ENCODE measurements at regions of chr5 and their contacts with region 1.

Region 1: GRCh38 chr5:149367249-149367971 is 9.6 kb downstream of the PCYOX1L start:
- DNase-seq: peak; percentile 71
- ATAC-seq: peak; percentile 65
- H3K4me3 Mint-ChIP-seq: no peak overlapping the region
- H3K27ac Mint-ChIP-seq: no peak overlapping the region
- H3K4me1 Mint-ChIP-seq: peaks cover 7% of the 10 kb centered on the region
- H3K27me3 Mint-ChIP-seq: no peaks in the 10 kb centered on the region

Region 2: DNA sequence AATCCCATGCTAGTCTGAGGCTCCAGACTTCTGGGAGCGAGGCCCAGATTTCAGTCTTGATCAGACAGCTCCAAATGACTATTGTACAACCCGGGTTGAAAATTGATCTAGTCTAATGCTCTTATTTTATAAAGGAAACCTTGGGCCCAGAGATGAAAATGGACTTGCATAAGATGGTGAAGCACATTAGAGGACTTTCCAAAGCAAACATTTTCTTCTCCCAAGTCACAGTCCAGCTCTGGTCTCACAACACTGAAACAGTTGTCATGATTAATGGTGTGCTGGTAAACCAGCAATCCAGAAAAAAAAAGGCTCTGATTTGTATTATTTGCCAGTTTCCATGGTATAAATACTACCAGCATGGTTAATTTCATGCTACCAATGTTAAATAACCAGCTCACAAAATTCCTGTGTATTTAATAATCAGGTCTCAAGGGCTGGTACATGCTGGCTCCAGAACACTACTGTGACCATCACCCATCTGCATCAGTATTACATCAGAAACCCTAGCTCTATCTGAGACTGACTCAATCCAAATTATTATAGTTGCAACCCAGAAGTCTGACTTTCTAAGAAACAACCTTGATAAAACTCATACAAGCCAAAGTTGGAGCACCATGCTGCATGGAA is 258.6 kb before region 1 on chr5:
- CTCF ChIA-PET with region 1: no interaction called
- POLR2A ChIA-PET with region 1: no interaction called
- intact Hi-C with region 1: no loop called
- DNase-seq: no peak
- ATAC-seq: no peak
- H3K4me3 Mint-ChIP-seq: no peak overlapping the region
- H3K27ac Mint-ChIP-seq: no peak overlapping the region
- H3K4me1 Mint-ChIP-seq: no peaks in the 10 kb centered on the region
- H3K27me3 Mint-ChIP-seq: no peaks in the 10 kb centered on the region

Region 3: GRCh38 chr5:149141224-149141956 is 226.0 kb before region 1 on chr5 and contains the start of gene ABLIM3:
- CTCF ChIA-PET with region 1: interaction called, 7 read pairs
- POLR2A ChIA-PET with region 1: no interaction called
- intact Hi-C with region 1: loop called in 1 of 2 experiments (anchors 5 kb)
- DNase-seq: peak; percentile 83
- ATAC-seq: peak; percentile 96
- H3K4me3 Mint-ChIP-seq: peak within 1 kb of the TSS; percentile 29
- H3K27ac Mint-ChIP-seq: no peak within 1 kb of the TSS
- H3K4me1 Mint-ChIP-seq: no peaks in the 10 kb centered on the region
- H3K27me3 Mint-ChIP-seq: peaks cover 5% of the 10 kb centered on the region
- total RNA-seq, gene ABLIM3: 0.07 TPM in 1 of 2 experiments, not detected in the other

Region 4: DNA sequence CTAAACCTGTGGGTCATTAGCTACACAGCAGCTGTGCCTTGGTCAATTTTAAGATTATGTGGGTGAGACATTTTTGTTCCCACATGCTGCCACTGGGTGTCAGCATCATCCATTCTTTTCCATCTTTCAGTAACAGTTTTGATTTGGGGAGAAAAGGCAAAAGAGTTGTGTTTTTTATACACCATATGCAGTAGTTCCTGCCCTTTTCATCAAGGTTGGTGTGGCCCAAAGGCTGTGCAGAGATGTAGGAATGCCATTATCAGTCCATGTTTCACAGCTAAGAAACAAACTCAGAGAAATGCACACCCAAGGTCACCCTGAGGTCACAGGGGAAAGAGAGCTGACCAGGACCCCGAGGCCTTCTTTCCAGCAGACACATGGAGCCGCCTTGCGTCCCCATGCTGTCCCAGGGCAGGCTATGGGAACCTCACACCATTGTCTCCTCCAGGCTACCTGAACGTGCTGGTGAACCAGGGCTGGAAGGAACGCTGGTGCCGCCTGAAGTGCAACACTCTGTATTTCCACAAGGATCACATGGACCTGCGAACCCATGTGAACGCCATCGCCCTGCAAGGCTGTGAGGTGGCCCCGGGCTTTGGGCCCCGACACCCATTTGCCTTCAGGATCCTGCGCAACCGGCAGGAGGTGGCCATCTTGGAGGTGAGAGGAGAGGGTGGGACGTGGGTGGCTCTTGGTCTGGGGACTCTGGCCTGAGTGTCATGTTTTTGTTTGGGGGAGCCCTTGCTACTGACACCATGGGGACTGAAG is 49.9 kb before region 1 on chr5:
- CTCF ChIA-PET with region 1: interaction called, 22 read pairs
- POLR2A ChIA-PET with region 1: no interaction called
- intact Hi-C with region 1: loop called (anchors 1 kb)
- DNase-seq: peak; percentile 52
- ATAC-seq: peak; percentile 74
- H3K4me3 Mint-ChIP-seq: no peak overlapping the region
- H3K27ac Mint-ChIP-seq: no peak overlapping the region
- H3K4me1 Mint-ChIP-seq: no peaks in the 10 kb centered on the region
- H3K27me3 Mint-ChIP-seq: no peaks in the 10 kb centered on the region

Region 5: DNA sequence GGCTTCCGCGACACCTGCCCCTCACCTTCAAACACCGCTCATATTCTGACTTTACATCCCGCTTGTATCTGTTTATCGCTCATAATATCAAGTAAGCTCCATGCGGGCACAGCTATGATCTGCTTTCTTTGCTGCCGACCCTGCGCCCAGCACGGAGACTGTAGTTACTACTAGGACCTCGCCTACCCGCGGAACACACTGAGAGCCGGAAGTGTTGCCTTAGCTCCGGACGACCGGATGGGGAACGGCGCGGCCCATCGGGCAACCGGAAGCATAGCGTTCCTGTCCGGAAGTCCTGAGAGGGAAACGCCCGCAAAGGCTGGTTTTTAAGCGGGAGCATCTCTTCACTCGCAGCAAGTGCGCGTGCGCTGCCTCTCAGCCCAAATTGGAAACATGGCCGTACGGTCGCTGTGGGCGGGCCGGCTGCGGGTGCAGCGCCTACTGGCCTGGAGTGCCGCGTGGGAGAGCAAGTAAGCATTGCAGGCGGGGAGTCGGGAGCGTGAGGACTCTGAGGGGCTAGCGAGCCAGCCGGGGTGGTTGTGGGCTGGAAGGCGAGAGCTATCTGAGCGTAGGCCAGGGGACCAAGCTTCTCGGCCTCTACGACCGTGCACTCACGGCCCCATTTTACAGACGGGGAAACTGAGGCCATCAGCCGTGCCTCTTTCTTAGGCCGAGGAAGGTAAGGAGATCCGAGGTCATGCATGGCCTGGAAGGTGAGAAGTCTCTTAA is 22.1 kb before region 1 on chr5 and contains the start of gene GRPEL2:
- CTCF ChIA-PET with region 1: interaction called, 11 read pairs
- POLR2A ChIA-PET with region 1: no interaction called
- intact Hi-C with region 1: no loop called
- DNase-seq: peak; percentile 97
- ATAC-seq: peak; percentile 89
- H3K4me3 Mint-ChIP-seq: peak within 1 kb of the TSS; percentile 96
- H3K27ac Mint-ChIP-seq: peak within 1 kb of the TSS; percentile 99
- H3K4me1 Mint-ChIP-seq: peaks cover 49% of the 10 kb centered on the region
- H3K27me3 Mint-ChIP-seq: no peaks in the 10 kb centered on the region
- total RNA-seq, gene GRPEL2: 27.1 to 37.2 TPM

Region 6: DNA sequence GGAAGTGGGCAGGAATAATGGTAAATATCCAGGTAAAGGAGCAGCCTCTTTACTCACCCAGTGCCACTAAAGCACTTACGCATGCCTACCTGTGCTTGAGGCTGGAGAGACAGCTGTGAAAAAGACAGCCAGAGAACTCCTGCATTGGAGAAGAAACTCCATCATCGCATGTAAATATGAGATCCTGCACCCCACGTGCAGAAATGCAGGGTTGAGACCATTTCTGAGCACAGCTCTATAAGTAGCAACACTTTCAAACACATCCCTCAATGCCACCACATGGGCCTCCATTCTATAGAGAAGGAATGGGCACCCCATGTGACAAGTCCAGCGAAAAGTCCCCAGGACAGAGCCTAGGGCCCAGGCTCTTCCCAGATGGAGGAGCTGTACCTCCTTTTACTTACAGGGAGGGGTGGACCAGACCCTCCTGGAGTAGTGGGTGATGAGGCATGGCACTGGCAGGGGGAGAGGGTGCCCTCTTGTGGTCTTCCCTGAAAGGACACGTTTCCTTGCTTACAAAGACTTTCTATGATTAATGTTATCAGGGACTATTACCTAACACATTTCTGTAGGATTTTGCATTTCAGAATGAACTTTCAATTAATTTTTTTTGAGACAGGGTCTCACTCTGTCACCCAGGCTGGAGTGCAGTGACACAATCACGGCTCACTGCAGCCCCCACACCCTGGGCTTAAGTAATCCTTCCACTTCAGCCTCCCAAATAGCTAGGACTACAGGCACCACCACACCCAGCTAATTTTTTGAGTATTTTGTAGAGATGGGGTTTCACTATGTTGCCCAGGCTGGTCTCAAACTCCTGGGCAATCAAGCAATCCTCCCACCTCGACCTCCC is 67.0 kb after region 1 on chr5:
- CTCF ChIA-PET with region 1: interaction called, 29 read pairs
- POLR2A ChIA-PET with region 1: no interaction called
- intact Hi-C with region 1: loop called in 1 of 2 experiments (anchors 5 kb)
- DNase-seq: peak; percentile 75
- ATAC-seq: peak; percentile 66
- H3K4me3 Mint-ChIP-seq: no peak overlapping the region
- H3K27ac Mint-ChIP-seq: no peak overlapping the region
- H3K4me1 Mint-ChIP-seq: peaks cover 14% of the 10 kb centered on the region
- H3K27me3 Mint-ChIP-seq: no peaks in the 10 kb centered on the region

Measured in activated CD4-positive, alpha-beta T cell treated with anti-CD3 and anti-CD28 coated beads for 36 hours (primary cell).